Activated T-helper 1 cell treated with anti-CD3 and anti-CD28 coated beads, Interleukin-12 subunit alpha, Interleukin-12 subunit beta, Interleukin-2, Interleukin-4 antibody, amounts not matched to agents 30 ng/mL and 10 ng/mL and 1 ng/mL, durations not matched to agents 14 hours and 24 hours and 36 hours (primary cell): ENCODE measurements at regions of chr7 and their contacts with region 1.

Region 1: DNA sequence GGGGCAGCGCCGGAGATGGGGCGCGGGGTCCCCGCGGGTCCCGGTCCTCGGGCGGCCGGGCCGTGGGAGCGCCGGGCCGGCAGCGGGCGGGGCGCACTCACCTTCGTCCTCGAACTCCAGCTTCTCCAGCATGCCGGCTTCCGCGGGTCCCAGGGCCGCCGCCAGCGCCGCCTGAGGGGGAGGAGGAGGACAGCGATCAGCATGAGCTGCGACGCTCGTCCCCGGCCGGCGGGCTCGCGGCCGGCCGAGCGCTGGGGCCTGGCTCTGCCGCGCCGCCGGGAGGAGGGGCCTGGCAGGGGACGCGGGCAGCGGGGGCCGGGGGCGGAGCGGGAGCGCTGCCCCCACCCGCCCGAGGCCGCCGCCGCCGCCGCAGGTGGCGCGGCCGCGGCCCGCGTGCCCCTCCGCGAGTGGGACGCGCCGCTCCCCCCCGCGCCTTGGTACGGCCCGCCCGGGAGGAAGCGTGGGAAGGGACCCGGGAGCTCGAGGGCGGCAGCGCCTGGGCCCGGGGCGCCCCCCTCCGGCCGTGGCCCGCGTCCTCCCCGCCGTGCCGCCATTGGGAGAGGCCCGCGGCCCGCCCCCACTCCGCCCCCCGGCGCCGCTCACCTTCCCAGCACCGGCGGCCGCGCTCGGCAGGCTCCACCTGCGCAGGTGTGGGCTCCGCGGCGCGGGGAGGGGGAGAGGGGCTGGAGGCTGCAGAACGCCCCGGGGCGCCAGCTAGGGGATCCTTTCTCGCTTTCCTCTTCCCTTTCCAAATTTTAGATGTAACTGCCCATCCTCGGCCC is 112.5 kb upstream of the RHEB start:
- DNase-seq: peak; percentile 85
- H3K4me3 Mint-ChIP-seq: peak overlapping the region; percentile 94
- H3K27ac Mint-ChIP-seq: peak overlapping the region; percentile 96
- H3K4me1 Mint-ChIP-seq: peaks cover 23% of the 10 kb centered on the region
- H3K27me3 Mint-ChIP-seq: peaks cover 9% of the 10 kb centered on the region

Region 2: GRCh38 chr7:150974468-150975391 is 657.4 kb before region 1 on chr7:
- intact Hi-C with region 1: no loop called
- DNase-seq: peak; percentile 73
- H3K4me3 Mint-ChIP-seq: peak overlapping the region; percentile 83
- H3K27ac Mint-ChIP-seq: peak overlapping the region; percentile 58
- H3K4me1 Mint-ChIP-seq: peaks cover 29% of the 10 kb centered on the region
- H3K27me3 Mint-ChIP-seq: peaks cover 25% of the 10 kb centered on the region

Region 3: GRCh38 chr7:151341357-151342101 is 290.6 kb before region 1 on chr7 and contains the start of gene NUB1:
- intact Hi-C with region 1: loop called (anchors 2 kb)
- DNase-seq: peak; percentile 92
- H3K4me3 Mint-ChIP-seq: peak within 1 kb of the TSS; percentile 83
- H3K27ac Mint-ChIP-seq: peak within 1 kb of the TSS; percentile 76
- H3K4me1 Mint-ChIP-seq: peaks cover 23% of the 10 kb centered on the region
- H3K27me3 Mint-ChIP-seq: no peaks in the 10 kb centered on the region
- total RNA-seq, gene NUB1: 40.3 and 41.2 TPM in 2 replicates

Region 4: GRCh38 chr7:151472644-151473380 is 159.3 kb before region 1 on chr7:
- intact Hi-C with region 1: loop called (anchors 5 kb)
- DNase-seq: no peak
- H3K4me3 Mint-ChIP-seq: no peak overlapping the region
- H3K27ac Mint-ChIP-seq: no peak overlapping the region
- H3K4me1 Mint-ChIP-seq: peaks cover 54% of the 10 kb centered on the region
- H3K27me3 Mint-ChIP-seq: no peaks in the 10 kb centered on the region

Region 5: GRCh38 chr7:151519765-151520418 is 112.3 kb before region 1 on chr7 and contains the start of gene RHEB:
- intact Hi-C with region 1: loop called (anchors 1 kb)
- DNase-seq: peak; percentile 97
- H3K4me3 Mint-ChIP-seq: peak within 1 kb of the TSS; percentile 94
- H3K27ac Mint-ChIP-seq: peak within 1 kb of the TSS; percentile 99
- H3K4me1 Mint-ChIP-seq: peaks cover 32% of the 10 kb centered on the region
- H3K27me3 Mint-ChIP-seq: peaks cover 10% of the 10 kb centered on the region
- total RNA-seq, gene RHEB: 62.5 and 65.5 TPM in 2 replicates

Region 6: GRCh38 chr7:151696721-151697514 is 64.8 kb after region 1 on chr7:
- intact Hi-C with region 1: no loop called
- DNase-seq: no peak
- H3K4me3 Mint-ChIP-seq: no peak overlapping the region
- H3K27ac Mint-ChIP-seq: no peak overlapping the region
- H3K4me1 Mint-ChIP-seq: no peaks in the 10 kb centered on the region
- H3K27me3 Mint-ChIP-seq: no peaks in the 10 kb centered on the region

Region 7: DNA sequence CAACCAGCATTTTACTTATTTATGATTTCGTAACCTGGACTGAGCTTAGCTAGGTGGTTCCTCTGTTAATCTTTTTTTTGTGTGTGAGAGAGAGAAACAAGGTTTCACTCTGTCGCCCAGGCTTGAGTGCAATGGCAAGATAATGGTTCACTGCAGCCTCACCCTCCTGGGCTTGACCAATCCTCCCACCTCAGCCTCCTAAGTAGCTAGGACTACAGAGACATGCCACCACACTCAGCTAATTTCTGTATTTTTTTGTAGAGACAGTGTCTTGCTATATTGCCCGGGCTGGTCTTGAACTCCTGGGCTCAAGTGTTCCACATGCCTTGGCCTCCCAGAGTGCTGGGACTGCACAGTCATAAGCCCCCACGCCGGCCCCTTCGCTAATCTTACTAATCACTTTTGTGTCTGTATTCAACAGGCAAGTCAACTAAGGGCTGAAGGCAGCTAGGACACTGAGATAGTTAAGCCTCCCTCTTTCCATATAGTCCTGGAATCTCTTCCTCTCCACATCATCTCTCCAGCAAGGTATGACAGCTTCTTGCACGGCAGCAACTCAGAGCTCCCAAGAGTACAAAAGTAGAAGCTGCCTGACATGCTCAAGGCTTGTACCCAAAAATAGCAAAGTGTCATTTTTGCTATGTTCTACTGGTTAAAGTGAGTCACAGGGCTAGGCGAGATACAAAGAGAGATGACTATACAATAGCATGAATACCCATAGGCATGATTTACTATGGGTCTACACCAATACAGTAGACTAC is 792.4 kb after region 1 on chr7:
- intact Hi-C with region 1: loop called (anchors 10 kb)
- DNase-seq: no peak
- H3K4me3 Mint-ChIP-seq: no peak overlapping the region
- H3K27ac Mint-ChIP-seq: peak overlapping the region; percentile 66
- H3K4me1 Mint-ChIP-seq: peaks cover 45% of the 10 kb centered on the region
- H3K27me3 Mint-ChIP-seq: no peaks in the 10 kb centered on the region